Natural killer cell (primary cell): ENCODE measurements at regions of chr11 and their contacts with region 1.

Region 1: GRCh38 chr11:8911029-8911826 is at the start of gene AKIP1:
- DNase-seq: peak; percentile 44 to 91
- ATAC-seq: peak; percentile 66 to 86 (median 78)
- H3K4me3 ChIP-seq: peak within 1 kb of the TSS; percentile 71
- H3K4me3 Mint-ChIP-seq: peak within 1 kb of the TSS; percentile 97
- H3K27ac ChIP-seq: peak within 1 kb of the TSS; percentile 31
- H3K27ac Mint-ChIP-seq: peak within 1 kb of the TSS in 1 of 2 donors; percentile 83
- H3K4me1 ChIP-seq: peaks cover 16% of the 10 kb centered on the region
- H3K4me1 Mint-ChIP-seq: peaks cover 21 to 33% of the 10 kb centered on the region in 2 donors
- H3K27me3 ChIP-seq: no peaks in the 10 kb centered on the region
- H3K27me3 Mint-ChIP-seq: peaks cover 12 to 13% of the 10 kb centered on the region in 2 donors
- CTCF ChIP-seq: no peak
- total RNA-seq, gene AKIP1: 4.0 to 7.0 (median 4.0) TPM

Region 2: DNA sequence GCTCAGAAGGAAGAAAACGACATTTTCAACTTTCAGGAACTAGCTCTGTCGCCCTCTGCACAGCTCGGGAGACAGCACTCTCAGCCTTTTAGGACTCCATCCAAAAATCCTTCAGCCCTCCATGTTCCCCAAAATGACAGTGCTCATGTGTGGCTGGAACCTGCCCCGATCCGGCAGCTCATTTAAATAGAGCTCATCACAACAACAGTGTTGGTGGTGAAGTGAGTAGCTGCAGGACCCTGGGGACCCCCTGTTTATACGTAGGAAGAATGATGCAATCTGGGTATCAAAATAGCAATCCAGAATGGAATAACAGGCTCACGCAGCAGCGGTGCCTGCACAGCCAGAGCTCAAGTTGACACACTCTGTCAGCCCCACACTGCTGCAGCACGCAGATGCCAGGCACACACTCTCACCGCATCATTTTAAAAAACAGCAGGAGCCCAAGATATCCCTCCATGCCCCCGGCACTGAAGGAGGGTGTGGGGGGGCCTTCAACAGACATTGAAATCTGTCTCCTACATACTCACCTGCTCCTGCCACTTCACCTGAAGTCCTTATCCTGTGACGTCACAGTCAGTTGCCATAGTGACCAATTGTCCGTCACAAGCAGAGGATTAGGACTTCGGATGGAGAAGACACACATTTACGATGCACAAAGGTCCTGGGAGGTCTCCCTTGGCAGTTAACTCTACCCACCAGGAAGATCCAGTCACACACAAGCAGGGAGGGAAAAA is 252.7 kb before region 1 on chr11:
- intact Hi-C with region 1: no loop called
- DNase-seq: no peak
- ATAC-seq: no peak
- H3K4me3 ChIP-seq: no peak overlapping the region
- H3K4me3 Mint-ChIP-seq: no peak overlapping the region
- H3K27ac ChIP-seq: no peak overlapping the region
- H3K27ac Mint-ChIP-seq: no peak overlapping the region
- H3K4me1 ChIP-seq: no peaks in the 10 kb centered on the region
- H3K4me1 Mint-ChIP-seq: peaks cover 0 to 5% of the 10 kb centered on the region in 2 donors
- H3K27me3 ChIP-seq: no peaks in the 10 kb centered on the region
- H3K27me3 Mint-ChIP-seq: no peaks in the 10 kb centered on the region
- CTCF ChIP-seq: no peak

Region 3: DNA sequence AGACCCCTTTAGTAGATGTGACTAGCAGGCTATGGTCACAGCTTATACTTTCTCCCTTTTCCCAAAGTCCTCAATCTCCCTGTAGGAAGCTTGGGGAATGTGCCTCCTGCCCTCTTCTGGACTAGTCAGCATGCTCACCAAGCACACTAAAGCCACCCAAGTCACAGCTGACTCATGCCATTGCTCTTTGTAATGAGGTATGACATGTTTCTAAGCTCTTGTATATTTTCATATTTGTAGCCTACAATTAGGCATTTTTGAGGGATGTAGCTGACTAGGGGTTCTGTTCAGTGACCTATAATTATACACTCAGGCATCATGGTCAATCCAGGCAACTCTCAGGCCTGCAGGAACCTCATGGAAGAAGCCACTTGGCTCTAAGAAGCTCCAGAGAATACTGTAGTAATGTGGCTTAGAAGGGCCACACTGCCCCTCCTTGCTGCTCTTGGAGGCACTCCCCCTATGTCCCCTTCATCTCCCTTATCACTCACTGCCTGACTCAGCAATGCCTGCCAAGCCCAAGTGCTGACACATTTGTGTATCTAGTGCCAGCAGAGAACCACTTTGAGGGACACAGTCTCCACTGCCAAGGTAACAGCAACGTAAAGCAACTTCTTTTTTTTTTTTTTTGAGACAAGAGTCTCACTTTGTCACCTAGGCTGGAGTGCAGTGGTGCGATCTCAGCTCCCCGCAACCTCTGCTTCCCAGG is 142.4 kb before region 1 on chr11:
- intact Hi-C with region 1: no loop called
- DNase-seq: no peak
- ATAC-seq: no peak
- H3K4me3 ChIP-seq: no peak overlapping the region
- H3K4me3 Mint-ChIP-seq: no peak overlapping the region
- H3K27ac ChIP-seq: no peak overlapping the region
- H3K27ac Mint-ChIP-seq: no peak overlapping the region
- H3K4me1 ChIP-seq: no peaks in the 10 kb centered on the region
- H3K4me1 Mint-ChIP-seq: peaks cover 5 to 8% of the 10 kb centered on the region in 2 donors
- H3K27me3 ChIP-seq: no peaks in the 10 kb centered on the region
- H3K27me3 Mint-ChIP-seq: no peaks in the 10 kb centered on the region
- CTCF ChIP-seq: no peak

Region 4: GRCh38 chr11:8964324-8965320 is 53.4 kb after region 1 on chr11 and contains the start of gene TMEM9B:
- intact Hi-C with region 1: loop called (anchors 5 kb)
- DNase-seq: peak; percentile 73 to 85
- ATAC-seq: peak; percentile 79 to 91 (median 86)
- H3K4me3 ChIP-seq: peak within 1 kb of the TSS; percentile 97
- H3K4me3 Mint-ChIP-seq: peak within 1 kb of the TSS; percentile 95
- H3K27ac ChIP-seq: peak within 1 kb of the TSS; percentile 98
- H3K27ac Mint-ChIP-seq: peak within 1 kb of the TSS; percentile 91 to 96
- H3K4me1 ChIP-seq: peaks cover 19% of the 10 kb centered on the region
- H3K4me1 Mint-ChIP-seq: peaks cover 23 to 31% of the 10 kb centered on the region in 2 donors
- H3K27me3 ChIP-seq: no peaks in the 10 kb centered on the region
- H3K27me3 Mint-ChIP-seq: no peaks in the 10 kb centered on the region
- CTCF ChIP-seq: no peak
- total RNA-seq, gene TMEM9B: 46.5 to 55.2 (median 51.4) TPM

Region 5: GRCh38 chr11:9137293-9138132 is 226.3 kb after region 1 on chr11:
- intact Hi-C with region 1: loop called (anchors 2 kb)
- DNase-seq: peak; percentile 56 to 76
- ATAC-seq: peak; percentile 82 to 99 (median 98)
- H3K4me3 ChIP-seq: no peak overlapping the region
- H3K4me3 Mint-ChIP-seq: no peak overlapping the region
- H3K27ac ChIP-seq: no peak overlapping the region
- H3K27ac Mint-ChIP-seq: no peak overlapping the region
- H3K4me1 ChIP-seq: no peaks in the 10 kb centered on the region
- H3K4me1 Mint-ChIP-seq: peaks cover 0 to 6% of the 10 kb centered on the region in 2 donors
- H3K27me3 ChIP-seq: no peaks in the 10 kb centered on the region
- H3K27me3 Mint-ChIP-seq: no peaks in the 10 kb centered on the region
- CTCF ChIP-seq: peak; percentile 81

Region 6: DNA sequence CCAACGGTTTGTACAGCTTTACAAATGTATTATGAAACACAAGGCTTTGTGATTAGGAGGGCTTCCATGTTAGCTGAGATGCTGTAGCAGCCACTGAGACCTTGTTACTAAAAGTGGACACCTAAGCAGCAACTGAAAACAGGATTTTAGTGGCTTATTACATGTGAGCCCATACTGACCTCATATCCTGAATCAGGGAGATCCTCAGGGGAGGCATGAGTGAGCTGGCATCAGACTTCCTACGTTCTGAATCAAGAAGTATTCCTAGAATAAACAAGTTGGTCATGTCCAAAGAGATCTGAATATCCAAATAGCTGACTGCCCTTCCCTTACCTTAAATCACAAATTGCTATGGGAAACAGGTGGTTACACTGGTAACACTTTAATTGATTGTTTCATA is 239.3 kb after region 1 on chr11:
- intact Hi-C with region 1: no loop called
- DNase-seq: no peak
- ATAC-seq: no peak
- H3K4me3 ChIP-seq: no peak overlapping the region
- H3K4me3 Mint-ChIP-seq: no peak overlapping the region
- H3K27ac ChIP-seq: no peak overlapping the region
- H3K27ac Mint-ChIP-seq: no peak overlapping the region
- H3K4me1 ChIP-seq: no peaks in the 10 kb centered on the region
- H3K4me1 Mint-ChIP-seq: no peaks in the 10 kb centered on the region
- H3K27me3 ChIP-seq: no peaks in the 10 kb centered on the region
- H3K27me3 Mint-ChIP-seq: no peaks in the 10 kb centered on the region
- CTCF ChIP-seq: no peak